Activated B cell treated with CpG ODN at 0.5 μM for 24 hours (primary cell): ENCODE measurements at regions of chr17 and their contacts with region 1.

Region 1: GRCh38 chr17:21214015-21214776 is at the start of gene TMEM11:
- DNase-seq: peak; percentile 97
- ATAC-seq: peak; percentile 93
- H3K4me3 Mint-ChIP-seq: peak within 1 kb of the TSS; percentile 89
- H3K27ac Mint-ChIP-seq: peak within 1 kb of the TSS; percentile 90
- H3K4me1 Mint-ChIP-seq: peaks cover 48% of the 10 kb centered on the region
- H3K27me3 Mint-ChIP-seq: no peaks in the 10 kb centered on the region
- CTCF ChIP-seq: no peak
- total RNA-seq, gene TMEM11: 21.2 and 22.2 TPM in 2 replicates

Region 2: DNA sequence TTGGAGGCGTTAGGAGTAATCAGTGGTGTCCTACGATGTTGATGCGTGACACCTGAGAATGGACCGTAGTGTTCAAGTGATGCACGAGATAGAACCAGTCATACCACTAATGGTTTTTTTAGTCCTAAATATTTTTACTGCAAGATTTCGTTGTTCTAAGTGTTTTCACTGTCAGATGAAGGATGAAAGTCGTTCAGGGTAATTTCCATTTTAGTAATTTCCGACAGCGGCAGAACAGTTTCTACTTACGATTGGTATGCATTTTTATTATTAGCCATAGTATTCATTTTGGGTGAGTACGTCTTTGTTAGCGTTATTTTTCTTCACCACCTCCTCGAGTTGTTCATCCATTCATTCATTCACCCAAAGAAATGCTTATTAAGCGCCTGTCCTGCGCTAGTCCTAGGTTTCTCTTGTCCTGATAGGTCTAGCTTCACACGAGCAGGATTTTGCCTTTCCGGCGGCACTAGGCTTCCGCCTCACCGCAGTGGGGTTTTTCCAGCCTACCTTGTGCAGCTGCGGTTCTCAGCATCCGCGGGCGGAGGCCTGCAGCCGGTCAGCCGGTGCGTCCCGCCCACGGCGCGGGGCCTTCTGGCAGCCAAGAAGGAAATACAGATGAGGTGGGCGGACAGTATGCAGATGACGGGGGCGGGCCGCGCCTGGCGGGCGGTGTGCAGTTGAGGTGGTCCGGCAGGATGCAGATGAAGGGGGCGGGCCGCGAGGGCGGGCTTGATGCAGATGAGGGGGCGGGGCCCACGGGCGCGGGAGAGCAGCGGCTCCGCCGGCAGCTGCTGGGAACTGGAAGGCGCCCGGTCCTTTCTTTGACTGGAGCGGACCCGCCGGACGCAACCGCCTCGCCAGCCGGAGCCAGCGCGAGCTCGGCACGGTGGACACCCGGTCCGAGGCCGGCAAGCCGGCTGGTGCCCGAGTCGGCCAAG is 1058.7 kb before region 1 on chr17:
- CTCF ChIA-PET with region 1: no interaction called
- POLR2A ChIA-PET with region 1: no interaction called
- intact Hi-C with region 1: loop called (anchors 5 kb)
- DNase-seq: peak; percentile 99
- ATAC-seq: peak; percentile 93
- H3K4me3 Mint-ChIP-seq: no peak overlapping the region
- H3K27ac Mint-ChIP-seq: no peak overlapping the region
- H3K4me1 Mint-ChIP-seq: peaks cover 6% of the 10 kb centered on the region
- H3K27me3 Mint-ChIP-seq: no peaks in the 10 kb centered on the region
- CTCF ChIP-seq: no peak

Region 3: DNA sequence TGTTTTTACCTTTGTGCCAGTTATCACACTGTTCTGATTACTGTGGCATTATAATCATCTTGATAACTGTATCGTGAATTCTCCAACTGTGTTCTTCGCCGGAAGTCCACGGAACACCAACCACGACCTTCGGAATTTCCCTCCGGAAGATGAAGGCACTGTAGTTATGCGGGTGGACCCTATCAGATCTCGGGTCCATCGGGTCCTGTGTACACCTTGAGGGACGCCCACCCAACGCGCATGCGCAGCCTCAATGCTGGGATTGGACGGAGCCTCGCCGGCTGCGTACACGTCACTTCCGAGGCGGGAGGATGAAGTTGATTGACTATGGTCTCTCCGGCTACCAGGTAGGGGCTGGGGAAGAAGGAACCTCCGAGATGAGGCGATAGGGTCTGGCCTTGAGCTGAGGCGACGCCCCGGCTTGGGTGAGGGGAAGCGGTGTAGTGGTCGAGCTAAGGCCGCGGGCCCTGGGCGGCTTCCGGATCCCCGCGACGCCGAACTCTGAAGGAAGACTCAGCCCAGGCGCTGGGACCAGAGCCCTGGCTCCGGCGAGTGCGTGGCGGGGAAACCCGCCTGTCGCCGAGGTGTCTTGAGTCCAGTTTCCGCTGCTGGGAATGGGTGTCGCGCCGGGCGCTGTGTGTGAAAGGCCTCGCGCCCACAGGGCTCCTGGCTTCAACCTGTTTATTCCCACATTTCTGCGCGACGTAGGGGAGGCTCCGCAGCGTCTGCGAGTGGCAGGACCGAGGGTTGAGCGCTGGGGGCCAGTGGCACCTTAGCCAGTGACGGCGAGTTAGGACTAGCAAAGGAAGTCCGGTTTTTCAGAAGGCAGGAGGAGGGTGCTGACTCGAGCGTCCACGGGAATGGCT is 87.3 kb before region 1 on chr17 and contains the start of gene DHRS7B:
- CTCF ChIA-PET with region 1: no interaction called
- POLR2A ChIA-PET with region 1: interaction called, 8 read pairs
- intact Hi-C with region 1: loop called (anchors 1 kb)
- DNase-seq: peak; percentile 95
- ATAC-seq: peak; percentile 90
- H3K4me3 Mint-ChIP-seq: peak within 1 kb of the TSS; percentile 94
- H3K27ac Mint-ChIP-seq: peak within 1 kb of the TSS; percentile 91
- H3K4me1 Mint-ChIP-seq: peaks cover 35% of the 10 kb centered on the region
- H3K27me3 Mint-ChIP-seq: peaks cover 3% of the 10 kb centered on the region
- CTCF ChIP-seq: no peak
- total RNA-seq, gene DHRS7B: 11.8 and 12.1 TPM in 2 replicates

Region 4: DNA sequence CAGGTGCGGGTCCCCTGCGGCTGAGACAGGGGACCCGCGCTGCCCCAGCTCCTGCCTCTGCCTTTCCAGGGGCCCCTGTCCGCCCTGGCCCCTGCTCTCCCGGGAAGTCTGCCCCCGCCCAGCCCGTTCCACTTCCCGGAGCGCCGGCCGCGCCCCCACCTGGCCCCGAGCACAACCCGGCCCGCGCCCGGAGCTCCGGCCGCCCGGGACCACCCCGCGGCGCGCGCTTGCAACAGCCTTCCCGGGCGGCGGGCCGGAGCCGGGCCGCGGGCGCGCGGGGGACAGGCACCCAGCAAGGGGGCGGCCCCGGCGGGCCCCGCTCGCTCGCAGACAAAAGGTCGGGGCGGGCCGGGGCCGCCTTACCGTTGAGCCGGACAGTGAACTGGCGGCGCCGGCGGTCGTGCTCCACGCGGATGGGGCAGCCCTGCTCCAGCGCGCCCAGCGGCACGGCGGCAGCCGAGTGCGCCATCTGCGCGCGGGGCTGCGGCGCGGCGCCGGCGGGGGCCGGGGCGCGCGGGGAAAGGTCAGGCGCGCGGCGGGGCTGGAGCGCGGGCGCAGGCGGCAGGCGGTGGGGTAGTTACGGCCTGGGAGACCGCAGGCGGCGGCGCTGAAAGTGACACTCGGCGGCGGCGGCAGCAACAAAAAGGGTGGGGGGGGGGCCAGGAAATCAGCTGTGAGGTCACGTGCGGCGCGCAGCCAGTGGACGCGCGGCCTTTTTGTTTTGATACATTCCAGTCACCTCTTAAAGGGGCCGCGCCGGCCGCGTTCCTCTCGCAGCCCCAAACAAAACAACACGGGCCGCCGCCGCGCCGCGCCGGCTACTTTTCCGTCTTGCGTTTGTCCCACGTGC is 38.8 kb after region 1 on chr17 and contains the start of gene NATD1:
- CTCF ChIA-PET with region 1: no interaction called
- POLR2A ChIA-PET with region 1: interaction called, 6 read pairs
- intact Hi-C with region 1: loop called (anchors 1 kb)
- DNase-seq: peak; percentile 65
- ATAC-seq: peak; percentile 78
- H3K4me3 Mint-ChIP-seq: peak within 1 kb of the TSS; percentile 82
- H3K27ac Mint-ChIP-seq: peak within 1 kb of the TSS; percentile 76
- H3K4me1 Mint-ChIP-seq: peaks cover 21% of the 10 kb centered on the region
- H3K27me3 Mint-ChIP-seq: no peaks in the 10 kb centered on the region
- CTCF ChIP-seq: no peak
- total RNA-seq, gene NATD1: 1.5 and 1.7 TPM in 2 replicates

Region 5: GRCh38 chr17:21551081-21551881 is 337.1 kb after region 1 on chr17:
- CTCF ChIA-PET with region 1: no interaction called
- POLR2A ChIA-PET with region 1: no interaction called
- intact Hi-C with region 1: loop called (anchors 2 kb)
- DNase-seq: peak; percentile 75
- ATAC-seq: peak; percentile 97
- H3K4me3 Mint-ChIP-seq: peak overlapping the region; percentile 84
- H3K27ac Mint-ChIP-seq: no peak overlapping the region
- H3K4me1 Mint-ChIP-seq: peaks cover 11% of the 10 kb centered on the region
- H3K27me3 Mint-ChIP-seq: peaks cover 33% of the 10 kb centered on the region
- CTCF ChIP-seq: no peak